H1 (cell line): ENCODE measurements at regions of chr19 and their contacts with region 1.

Region 1: DNA sequence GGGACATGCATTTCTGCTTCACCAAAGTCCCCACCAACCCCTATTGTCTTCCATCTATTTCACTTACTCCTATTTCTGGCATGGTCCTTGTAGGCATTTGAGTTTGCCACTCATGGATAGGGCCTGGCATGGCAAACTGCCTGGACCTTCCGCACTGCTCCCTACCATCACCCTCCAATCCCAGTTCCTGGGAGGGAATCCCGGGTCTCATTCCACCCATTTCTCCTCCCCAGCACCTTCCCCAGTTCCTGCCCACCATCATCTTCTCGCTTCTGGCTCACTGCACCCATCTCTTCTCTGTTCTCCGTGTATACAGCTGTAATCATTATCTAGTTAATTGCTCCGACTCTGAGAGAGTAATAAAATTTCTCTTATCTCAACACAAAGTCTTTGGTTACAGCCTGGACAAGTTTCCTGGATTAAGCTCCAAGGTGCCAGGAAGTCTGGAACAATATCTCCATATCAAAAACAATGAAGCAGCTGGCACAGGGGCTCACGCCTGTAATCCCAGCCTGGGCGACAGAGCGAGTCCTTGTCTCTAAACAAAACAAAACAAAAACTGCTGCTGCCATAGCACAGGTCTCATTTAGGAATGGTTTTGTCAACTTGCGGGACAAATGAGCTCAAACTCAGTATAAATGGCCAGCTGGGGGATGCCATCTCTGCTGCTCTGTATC is 17.0 kb upstream of the COX7A1 start:
- DNase-seq: no peak
- H3K4me3 ChIP-seq: no peak overlapping the region; a peak in 1 of 8 replicates
- H3K27ac ChIP-seq: no peak overlapping the region
- H3K4me1 ChIP-seq: no peaks in the 10 kb centered on the region
- H3K27me3 ChIP-seq: no peaks in the 10 kb centered on the region
- CTCF ChIP-seq: no peak
- EP300 ChIP-seq: no peak
- POLR2A ChIP-seq: no peak
- RAD21 ChIP-seq: no peak

Region 2: DNA sequence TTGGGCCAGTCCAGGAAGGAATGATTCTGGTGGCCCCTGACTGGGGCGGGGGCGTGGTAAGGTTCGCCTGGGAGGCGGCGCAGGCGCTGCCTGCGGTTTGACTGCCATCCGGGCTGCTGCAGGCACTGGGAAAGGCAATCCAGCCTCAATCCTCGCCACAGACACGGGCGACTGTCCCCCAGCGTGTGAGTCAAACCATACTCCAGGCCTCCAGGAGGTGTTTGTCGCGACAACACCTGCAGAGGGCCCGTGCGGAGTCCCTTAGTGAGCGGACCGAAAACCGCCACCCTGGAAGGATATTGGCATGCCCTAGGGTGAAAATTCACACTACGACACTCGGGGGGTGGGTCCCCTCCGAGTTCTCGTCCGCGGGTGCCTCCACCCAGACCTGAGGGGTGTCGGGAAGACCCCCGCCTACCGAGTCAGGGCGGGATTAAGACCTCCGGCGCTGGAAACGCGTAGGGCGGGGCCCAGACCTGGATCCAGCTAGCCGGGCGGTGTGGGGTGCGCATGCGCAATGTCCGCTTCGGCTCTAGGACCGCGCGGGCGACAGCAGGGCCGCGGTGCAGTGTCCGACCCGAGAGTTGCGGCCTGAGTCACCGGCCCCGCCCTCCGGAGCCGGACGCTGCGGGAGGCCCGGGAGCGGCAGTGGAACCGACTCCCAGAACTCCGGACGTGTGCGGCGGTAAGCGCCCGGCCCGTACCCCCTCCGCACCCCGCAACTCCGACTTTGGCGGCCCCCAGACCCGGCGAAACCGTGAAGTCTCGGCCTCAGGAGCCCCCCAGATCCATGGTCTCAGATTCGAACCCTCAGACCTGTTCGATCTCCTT is 29.5 kb before region 1 on chr19 and contains the start of gene CAPNS1:
- CTCF ChIA-PET with region 1: interaction called, 6 read pairs
- POLR2A ChIA-PET with region 1: interaction called, 10 read pairs
- DNase-seq: peak; percentile 91 to 98
- H3K4me3 ChIP-seq: peak within 1 kb of the TSS; percentile 89 to 98 (median 97)
- H3K27ac ChIP-seq: peak within 1 kb of the TSS; percentile 36; the same call in 1 of the 2 replicates
- H3K4me1 ChIP-seq: peaks cover 0 to 6% (median 5%) of the 10 kb centered on the region in 4 experiments; a peak in 3 of 7 replicates
- H3K27me3 ChIP-seq: no peaks in the 10 kb centered on the region
- CTCF ChIP-seq: peak in 2 of 3 experiments; percentile 4 to 14; a peak in 2 of 4 replicates
- EP300 ChIP-seq: peak in 1 of 2 experiments; percentile 16; a peak in 1 of 3 replicates
- POLR2A ChIP-seq: peak in 1 of 2 experiments; percentile 72; a peak in 1 of 3 replicates
- RAD21 ChIP-seq: no peak
- total RNA-seq, gene CAPNS1: 382 and 386 TPM in 2 replicates

Region 3: DNA sequence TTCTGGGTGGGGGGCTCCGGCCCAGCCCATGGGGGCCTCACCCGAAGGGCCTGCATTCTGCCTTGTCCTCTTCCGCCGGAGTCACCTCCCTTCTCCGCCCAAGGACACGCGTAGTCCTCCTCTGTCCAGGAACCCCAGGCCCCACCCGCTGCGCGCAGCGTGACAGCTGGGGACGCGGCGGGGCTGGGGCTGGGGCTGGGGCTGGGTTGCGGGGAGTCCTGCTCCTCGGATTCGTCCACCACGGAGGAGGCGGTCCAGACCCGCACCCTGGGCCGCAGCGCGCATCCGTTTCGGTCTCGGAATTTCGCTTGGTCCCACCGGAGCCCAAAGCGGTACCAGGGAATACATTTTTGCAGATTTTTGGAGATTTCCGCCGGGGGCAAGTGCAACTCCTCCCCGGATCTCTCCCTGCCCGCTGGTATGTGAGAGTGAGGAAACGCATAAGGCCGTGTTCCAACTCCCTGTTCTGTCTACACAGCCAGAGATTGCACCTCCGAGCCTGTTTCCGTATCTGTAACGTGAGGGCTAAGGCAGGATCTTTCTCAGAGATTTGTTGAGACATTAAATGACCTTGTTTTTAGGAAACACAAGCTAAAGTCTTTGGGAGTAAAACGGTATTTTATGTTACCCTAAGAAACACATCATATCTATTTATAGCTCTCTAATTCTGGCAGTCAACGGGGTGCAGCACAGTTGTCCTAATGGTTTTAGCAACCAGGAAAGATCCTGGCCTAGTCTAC is 16.7 kb before region 1 on chr19 and contains the start of gene COX7A1:
- CTCF ChIA-PET with region 1: interaction called, 4 read pairs
- POLR2A ChIA-PET with region 1: interaction called, 29 read pairs
- DNase-seq: no peak
- H3K4me3 ChIP-seq: peak within 1 kb of the TSS; percentile 21 to 47 (median 38); a peak in 7 of 8 replicates
- H3K27ac ChIP-seq: no peak within 1 kb of the TSS
- H3K4me1 ChIP-seq: peaks cover 0 to 5% (median 0%) of the 10 kb centered on the region in 4 experiments; a peak in 1 of 7 replicates
- H3K27me3 ChIP-seq: no peaks in the 10 kb centered on the region
- CTCF ChIP-seq: no peak
- EP300 ChIP-seq: no peak
- POLR2A ChIP-seq: no peak
- RAD21 ChIP-seq: no peak
- total RNA-seq, gene COX7A1: 0.60 and 0.75 TPM in 2 replicates